Posterior vena cava (tissue), 2 donors: ENCODE measurements at regions of chr16 and their contacts with region 1.

Region 1: DNA sequence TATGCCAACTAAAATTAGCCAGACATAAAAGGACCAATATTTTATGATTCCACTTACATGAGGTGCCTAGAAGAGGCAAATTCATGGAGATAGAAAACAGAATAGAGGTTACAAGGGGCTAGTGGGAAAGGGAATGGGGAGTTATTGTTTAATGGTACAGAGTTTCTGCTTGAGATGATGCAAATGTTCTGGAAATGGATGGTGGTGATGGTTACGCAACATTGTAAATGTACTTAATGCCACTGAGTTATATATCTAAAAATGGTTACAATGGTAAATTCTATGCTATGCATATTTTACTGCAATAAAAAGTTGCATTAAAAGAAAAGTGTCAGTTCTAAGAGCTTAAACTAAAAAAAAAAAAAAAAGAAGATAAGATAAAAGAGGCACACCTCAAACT is 17.9 kb downstream of the MT1X start:
- DNase-seq: no peak

Region 2: DNA sequence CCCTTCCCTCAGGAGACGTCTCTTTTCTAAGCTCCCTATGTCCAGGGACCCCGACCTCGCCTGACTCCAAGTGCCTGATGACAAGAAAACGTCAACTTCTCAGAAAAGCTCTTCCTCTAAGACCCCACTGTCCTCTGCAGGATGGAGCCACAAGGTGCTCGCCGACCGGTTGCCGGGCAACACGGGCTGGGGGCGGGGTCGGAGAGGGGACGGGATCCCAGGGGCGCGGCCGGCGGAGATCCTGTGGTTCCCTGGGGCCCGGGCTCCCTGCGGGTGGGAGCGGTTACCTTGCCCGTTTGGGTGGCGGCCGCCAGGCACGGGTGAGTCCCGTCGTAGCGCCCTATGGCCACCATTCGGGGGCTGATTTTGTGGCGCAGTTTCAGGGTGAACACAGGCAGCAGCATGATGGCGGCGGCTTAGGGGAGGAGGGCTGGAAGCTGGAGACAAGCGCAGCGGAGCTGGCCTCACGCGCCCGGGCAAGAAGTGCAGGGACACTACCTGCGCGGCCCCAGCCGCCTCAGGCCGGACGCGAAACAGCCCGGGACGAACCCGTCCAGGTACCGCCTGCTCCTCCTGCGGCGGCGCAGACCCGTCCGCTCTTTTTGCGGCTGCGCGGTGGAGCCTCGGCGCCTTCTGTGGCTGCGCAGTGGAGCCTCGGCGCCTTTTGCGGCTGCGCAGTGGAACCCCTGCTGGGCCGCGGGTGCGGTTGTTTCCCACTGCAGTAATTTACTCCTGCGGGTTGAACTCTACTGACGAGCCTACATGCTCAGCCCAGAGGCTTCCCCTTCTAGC is 180.5 kb before region 1 on chr16 and contains the start of gene BBS2:
- intact Hi-C with region 1: loop called in 1 of 2 experiments (anchors 5 kb)
- DNase-seq: peak; percentile 97
- total RNA-seq, gene BBS2: 30.5 to 36.5 TPM

Region 3: GRCh38 chr16:56576585-56577293 is 123.5 kb before region 1 on chr16:
- intact Hi-C with region 1: loop called (anchors 2 to 10 kb)
- DNase-seq: peak; percentile 92

Region 4: GRCh38 chr16:56643080-56643778 is 57.0 kb before region 1 on chr16:
- intact Hi-C with region 1: no loop called
- DNase-seq: peak; percentile 95